ENCODE measurements at regions of chr11 and their contacts with region 1.

Region 1: GRCh38 chr11:75532200-75533048 is 6.7 kb upstream of the GDPD5 start:
- DNase-seq: peak; percentile 41
- ATAC-seq: peak; percentile 94
- H3K4me3 ChIP-seq: no peak overlapping the region
- H3K27ac ChIP-seq: no peak overlapping the region
- H3K4me1 ChIP-seq: peaks cover 2% of the 10 kb centered on the region; the same call in 1 of the 2 replicates
- H3K27me3 ChIP-seq: peaks cover 5% of the 10 kb centered on the region; the same call in 1 of the 2 replicates
- CTCF ChIP-seq: peak; percentile 89
- POLR2A ChIP-seq: no peak
- RAD21 ChIP-seq: peak; percentile 96

Region 2: GRCh38 chr11:75280227-75280701 is 252.2 kb before region 1 on chr11:
- CTCF ChIA-PET with region 1: no interaction called
- POLR2A ChIA-PET with region 1: no interaction called
- dilution Hi-C with region 1: no loop called
- in situ Hi-C with region 1: loop called (anchors 25 kb)
- intact Hi-C with region 1: loop called (anchors 5 kb)
- DNase-seq: peak; percentile 66
- ATAC-seq: peak; percentile 96
- H3K4me3 ChIP-seq: no peak overlapping the region
- H3K27ac ChIP-seq: no peak overlapping the region
- H3K4me1 ChIP-seq: peaks cover 2% of the 10 kb centered on the region
- H3K27me3 ChIP-seq: no peaks in the 10 kb centered on the region
- CTCF ChIP-seq: peak; percentile 93
- POLR2A ChIP-seq: peak; percentile 55
- RAD21 ChIP-seq: peak; percentile 99

Region 3: GRCh38 chr11:75328426-75329277 is 203.8 kb before region 1 on chr11:
- CTCF ChIA-PET with region 1: interaction called, 6 read pairs
- POLR2A ChIA-PET with region 1: no interaction called
- dilution Hi-C with region 1: no loop called
- in situ Hi-C with region 1: no loop called
- intact Hi-C with region 1: loop called (anchors 2 kb)
- DNase-seq: peak; percentile 81
- ATAC-seq: peak; percentile 75
- H3K4me3 ChIP-seq: no peak overlapping the region
- H3K27ac ChIP-seq: peak overlapping the region; percentile 89; the same call in 1 of the 2 replicates
- H3K4me1 ChIP-seq: peaks cover 29% of the 10 kb centered on the region
- H3K27me3 ChIP-seq: no peaks in the 10 kb centered on the region
- CTCF ChIP-seq: peak; percentile 88
- POLR2A ChIP-seq: 0 out of 2 replicates have a peak, but pooled peaks have one; percentile 39
- RAD21 ChIP-seq: peak; percentile 94

Region 4: DNA sequence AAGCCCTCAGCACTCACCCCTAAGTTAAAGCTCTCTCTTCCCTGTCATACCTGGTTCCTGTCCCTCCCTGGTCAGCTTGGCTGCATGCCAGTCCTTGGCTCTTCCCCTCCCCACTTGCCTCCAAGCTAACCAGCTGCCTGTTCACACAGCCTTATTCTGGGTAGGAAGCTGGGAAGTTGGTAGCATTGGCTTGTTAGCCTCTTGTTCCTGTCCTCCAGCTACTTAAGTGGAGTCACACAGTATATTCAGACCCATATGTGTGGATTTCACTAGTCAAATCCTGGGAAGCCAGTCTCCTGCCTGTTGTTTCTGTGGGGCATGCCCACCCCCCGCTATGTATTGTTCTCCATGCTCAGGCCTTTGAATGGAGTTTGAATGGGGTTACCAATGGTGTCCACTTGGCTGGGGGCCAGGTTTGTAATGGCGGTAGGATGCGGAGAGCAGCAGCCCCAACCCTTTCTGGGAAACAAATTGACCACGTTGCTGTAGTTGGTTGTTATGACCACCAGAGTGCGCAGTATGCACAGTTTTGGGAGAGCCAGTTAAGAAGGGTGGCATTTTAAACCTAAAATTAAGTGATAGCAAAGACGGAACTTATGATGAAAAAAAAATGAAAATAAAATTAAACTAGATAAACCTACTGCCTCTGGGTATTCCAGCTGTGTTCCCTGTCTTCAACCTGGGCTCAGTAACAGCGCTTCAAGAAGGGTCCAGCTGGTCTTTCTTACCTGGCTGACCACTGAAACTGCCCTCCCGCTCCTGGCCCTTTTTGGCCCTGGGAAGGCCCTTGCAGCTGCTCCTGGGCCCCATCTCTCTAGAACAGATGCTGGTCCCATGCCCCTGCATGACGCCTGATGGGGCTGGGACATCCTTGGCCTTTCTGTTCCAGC is 143.8 kb before region 1 on chr11:
- CTCF ChIA-PET with region 1: interaction called, 9 read pairs
- POLR2A ChIA-PET with region 1: no interaction called
- dilution Hi-C with region 1: no loop called
- in situ Hi-C with region 1: no loop called
- intact Hi-C with region 1: loop called (anchors 1 kb)
- DNase-seq: peak; percentile 81
- ATAC-seq: peak; percentile 91
- H3K4me3 ChIP-seq: no peak overlapping the region
- H3K27ac ChIP-seq: no peak overlapping the region
- H3K4me1 ChIP-seq: peaks cover 4% of the 10 kb centered on the region
- H3K27me3 ChIP-seq: peaks cover 4% of the 10 kb centered on the region
- CTCF ChIP-seq: peak; percentile 93
- POLR2A ChIP-seq: no peak
- RAD21 ChIP-seq: peak; percentile 91

Region 5: GRCh38 chr11:75408852-75409219 is 123.6 kb before region 1 on chr11:
- CTCF ChIA-PET with region 1: interaction called, 3 read pairs
- POLR2A ChIA-PET with region 1: no interaction called
- dilution Hi-C with region 1: no loop called
- in situ Hi-C with region 1: no loop called
- intact Hi-C with region 1: loop called (anchors 1 kb)
- DNase-seq: no peak
- ATAC-seq: no peak
- H3K4me3 ChIP-seq: no peak overlapping the region
- H3K27ac ChIP-seq: no peak overlapping the region
- H3K4me1 ChIP-seq: no peaks in the 10 kb centered on the region; the same call in 1 of the 2 replicates
- H3K27me3 ChIP-seq: no peaks in the 10 kb centered on the region
- CTCF ChIP-seq: no peak
- POLR2A ChIP-seq: no peak
- RAD21 ChIP-seq: no peak

Region 6: DNA sequence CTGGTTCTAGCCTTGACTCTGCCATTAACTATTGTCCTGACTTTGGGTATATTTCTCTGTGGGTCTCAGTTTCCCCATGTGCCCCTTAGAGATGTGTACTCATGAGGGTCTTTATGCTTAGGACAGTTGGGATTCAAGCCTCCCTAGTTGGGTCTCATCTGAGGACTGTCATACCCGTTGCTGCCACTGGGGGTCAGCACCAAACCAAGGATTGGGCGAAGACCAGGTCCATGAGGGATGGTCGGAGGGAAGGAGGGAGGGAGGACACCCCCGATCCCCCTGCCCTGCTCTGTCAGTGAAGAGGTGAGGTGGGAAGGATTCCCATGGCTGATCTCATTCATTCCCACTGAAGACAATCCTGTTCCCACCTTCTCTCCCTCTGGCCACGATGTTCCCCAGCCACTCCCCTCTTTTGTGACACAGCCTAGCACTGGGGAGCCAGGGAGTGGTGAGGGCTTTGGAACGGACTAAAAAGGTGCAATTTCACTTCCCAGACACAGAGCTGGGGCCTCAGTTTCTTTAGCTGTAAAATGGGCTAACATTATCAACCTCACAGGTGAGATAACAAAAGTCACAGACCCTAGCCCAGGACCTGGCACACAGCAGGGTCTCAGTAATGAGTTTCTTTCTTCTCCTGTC is 87.0 kb before region 1 on chr11:
- CTCF ChIA-PET with region 1: interaction called, 24 read pairs
- POLR2A ChIA-PET with region 1: no interaction called
- dilution Hi-C with region 1: no loop called
- in situ Hi-C with region 1: loop called (anchors 5 kb)
- intact Hi-C with region 1: loop called (anchors 1 kb)
- DNase-seq: peak; percentile 41
- ATAC-seq: peak; percentile 99
- H3K4me3 ChIP-seq: no peak overlapping the region
- H3K27ac ChIP-seq: no peak overlapping the region
- H3K4me1 ChIP-seq: no peaks in the 10 kb centered on the region
- H3K27me3 ChIP-seq: peaks cover 3% of the 10 kb centered on the region; the same call in 1 of the 2 replicates
- CTCF ChIP-seq: peak; percentile 95
- POLR2A ChIP-seq: peak; percentile 63; the same call in 1 of the 2 replicates
- RAD21 ChIP-seq: peak; percentile 100

Region 7: DNA sequence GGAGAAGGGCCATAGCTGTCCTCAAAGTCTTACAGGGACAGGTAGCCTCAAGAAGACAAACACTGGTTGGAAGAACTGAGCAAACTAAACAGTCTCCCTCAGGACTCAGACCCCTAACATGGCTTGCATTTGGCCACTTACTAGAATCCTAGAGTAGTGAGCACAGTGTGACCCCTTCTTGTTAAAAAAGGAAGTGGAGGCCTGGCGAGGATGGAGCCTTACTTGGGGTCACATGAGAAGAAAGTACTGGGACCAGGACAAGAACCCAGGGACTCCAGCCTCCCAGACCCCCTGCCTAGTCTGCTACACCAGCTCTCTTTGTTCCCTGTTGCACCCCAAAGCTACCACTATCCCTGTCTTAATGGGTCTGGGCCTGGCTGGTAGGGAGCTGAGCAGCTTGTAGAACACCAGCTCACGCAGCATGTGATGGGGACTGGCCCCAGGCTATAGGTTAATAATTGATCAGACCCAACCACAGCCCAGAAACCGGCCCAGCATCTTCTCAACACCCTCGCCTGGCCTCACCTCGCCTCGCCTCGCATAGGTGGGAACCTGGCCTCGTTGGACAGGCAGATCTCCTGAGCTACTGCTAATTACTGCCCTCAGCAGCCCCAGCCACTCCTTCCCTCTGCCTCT is 253.8 kb after region 1 on chr11:
- CTCF ChIA-PET with region 1: no interaction called
- POLR2A ChIA-PET with region 1: no interaction called
- dilution Hi-C with region 1: no loop called
- in situ Hi-C with region 1: no loop called
- intact Hi-C with region 1: no loop called
- DNase-seq: no peak
- ATAC-seq: no peak
- H3K4me3 ChIP-seq: no peak overlapping the region
- H3K27ac ChIP-seq: no peak overlapping the region
- H3K4me1 ChIP-seq: no peaks in the 10 kb centered on the region
- H3K27me3 ChIP-seq: peaks cover 41% of the 10 kb centered on the region
- CTCF ChIP-seq: no peak
- POLR2A ChIP-seq: no peak
- RAD21 ChIP-seq: no peak

Region 8: GRCh38 chr11:76318744-76319384 is 786.4 kb after region 1 on chr11:
- CTCF ChIA-PET with region 1: no interaction called
- POLR2A ChIA-PET with region 1: no interaction called
- dilution Hi-C with region 1: no loop called
- in situ Hi-C with region 1: no loop called
- intact Hi-C with region 1: no loop called
- DNase-seq: peak; percentile 61
- ATAC-seq: peak; percentile 89
- H3K4me3 ChIP-seq: no peak overlapping the region
- H3K27ac ChIP-seq: no peak overlapping the region
- H3K4me1 ChIP-seq: no peaks in the 10 kb centered on the region
- H3K27me3 ChIP-seq: peaks cover 46% of the 10 kb centered on the region
- CTCF ChIP-seq: peak; percentile 92
- POLR2A ChIP-seq: 0 out of 2 replicates have a peak, but pooled peaks have one; percentile 32
- RAD21 ChIP-seq: peak; percentile 96

Region 9: GRCh38 chr11:76670485-76671236 is 1138.2 kb after region 1 on chr11 and contains the start of gene LRRC32:
- CTCF ChIA-PET with region 1: no interaction called
- POLR2A ChIA-PET with region 1: no interaction called
- dilution Hi-C with region 1: no loop called
- in situ Hi-C with region 1: no loop called
- intact Hi-C with region 1: no loop called
- DNase-seq: no peak
- ATAC-seq: peak; percentile 15
- H3K4me3 ChIP-seq: peak within 1 kb of the TSS; percentile 25
- H3K27ac ChIP-seq: peak within 1 kb of the TSS; percentile 8
- H3K4me1 ChIP-seq: peaks cover 11% of the 10 kb centered on the region
- H3K27me3 ChIP-seq: 0 out of 2 replicates have a peak, but pooled peaks cover 3% of the 10 kb centered on the region
- CTCF ChIP-seq: no peak
- POLR2A ChIP-seq: no peak
- RAD21 ChIP-seq: no peak
- total RNA-seq, gene LRRC32: 4.2 and 5.2 TPM in 2 replicates

Measured in IMR-90 (cell line).